Vagina (tissue), 2 donors: ENCODE measurements at regions of chr9 and their contacts with region 1.

Region 1: GRCh38 chr9:105259731-105260612 is 15.5 kb downstream of the SLC44A1 start:
- DNase-seq: no peak
- H3K4me3 ChIP-seq: no peak overlapping the region
- H3K27ac ChIP-seq: no peak overlapping the region
- H3K4me1 ChIP-seq: peaks cover 47% of the 10 kb centered on the region
- H3K27me3 ChIP-seq: no peaks in the 10 kb centered on the region
- CTCF ChIP-seq: no peak
- POLR2A ChIP-seq: no peak

Region 2: GRCh38 chr9:105205787-105206495 is 54.0 kb before region 1 on chr9:
- intact Hi-C with region 1: loop called (anchors 5 kb)
- DNase-seq: peak in 1 of 2 donors; percentile 92
- H3K4me3 ChIP-seq: no peak overlapping the region
- H3K27ac ChIP-seq: peak overlapping the region; percentile 60
- H3K4me1 ChIP-seq: peaks cover 22% of the 10 kb centered on the region
- H3K27me3 ChIP-seq: no peaks in the 10 kb centered on the region
- CTCF ChIP-seq: no peak
- POLR2A ChIP-seq: no peak